MCF 10A (cell line): ENCODE measurements at regions of chr3 and their contacts with region 1.

Region 1: GRCh38 chr3:4416961-4417360 is 50.1 kb downstream of the SUMF1 start:
- DNase-seq: peak; percentile 100
- H3K4me3 Mint-ChIP-seq: no peak overlapping the region
- H3K27ac Mint-ChIP-seq: peak overlapping the region; percentile 44
- H3K4me1 Mint-ChIP-seq: peaks cover 14% of the 10 kb centered on the region
- H3K27me3 Mint-ChIP-seq: no peaks in the 10 kb centered on the region
- CTCF ChIP-seq: no peak

Region 2: DNA sequence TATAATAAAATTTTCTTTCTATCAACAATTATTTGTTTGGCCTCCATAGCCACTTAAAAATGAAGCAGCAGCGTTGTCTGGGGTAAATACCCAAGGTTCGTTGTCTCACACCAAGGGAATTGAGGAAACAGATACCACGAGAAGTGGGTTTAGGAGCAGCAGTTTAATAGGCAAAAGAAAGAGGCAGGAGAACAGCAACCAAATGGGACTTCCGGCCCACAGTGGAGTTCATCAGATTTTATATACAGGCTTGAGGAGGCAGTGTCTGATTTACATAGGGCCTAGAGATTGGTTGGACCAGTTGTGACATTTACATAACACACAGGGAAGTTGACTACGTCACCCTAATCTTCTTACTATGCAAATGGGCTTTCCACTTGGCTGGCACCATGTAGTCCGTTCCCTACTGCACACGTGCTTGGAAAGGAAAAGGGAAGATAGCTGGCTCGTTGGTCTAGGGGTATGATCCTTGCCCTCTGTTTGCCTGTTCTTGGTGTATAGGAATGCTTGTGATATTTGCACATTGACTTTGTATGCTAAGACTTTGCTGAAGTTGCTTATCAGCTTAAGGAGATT is 175.3 kb before region 1 on chr3:
- CTCF ChIA-PET with region 1: no interaction called
- POLR2A ChIA-PET with region 1: no interaction called
- intact Hi-C with region 1: no loop called
- DNase-seq: no peak
- H3K4me3 Mint-ChIP-seq: no peak overlapping the region
- H3K27ac Mint-ChIP-seq: no peak overlapping the region
- H3K4me1 Mint-ChIP-seq: no peaks in the 10 kb centered on the region
- H3K27me3 Mint-ChIP-seq: no peaks in the 10 kb centered on the region
- CTCF ChIP-seq: no peak

Region 3: GRCh38 chr3:4398120-4398940 is 18.6 kb before region 1 on chr3:
- CTCF ChIA-PET with region 1: interaction called, 10 read pairs
- POLR2A ChIA-PET with region 1: interaction called, 3 read pairs
- intact Hi-C with region 1: no loop called
- DNase-seq: no peak
- H3K4me3 Mint-ChIP-seq: no peak overlapping the region
- H3K27ac Mint-ChIP-seq: no peak overlapping the region
- H3K4me1 Mint-ChIP-seq: no peaks in the 10 kb centered on the region
- H3K27me3 Mint-ChIP-seq: no peaks in the 10 kb centered on the region
- CTCF ChIP-seq: no peak

Region 4: DNA sequence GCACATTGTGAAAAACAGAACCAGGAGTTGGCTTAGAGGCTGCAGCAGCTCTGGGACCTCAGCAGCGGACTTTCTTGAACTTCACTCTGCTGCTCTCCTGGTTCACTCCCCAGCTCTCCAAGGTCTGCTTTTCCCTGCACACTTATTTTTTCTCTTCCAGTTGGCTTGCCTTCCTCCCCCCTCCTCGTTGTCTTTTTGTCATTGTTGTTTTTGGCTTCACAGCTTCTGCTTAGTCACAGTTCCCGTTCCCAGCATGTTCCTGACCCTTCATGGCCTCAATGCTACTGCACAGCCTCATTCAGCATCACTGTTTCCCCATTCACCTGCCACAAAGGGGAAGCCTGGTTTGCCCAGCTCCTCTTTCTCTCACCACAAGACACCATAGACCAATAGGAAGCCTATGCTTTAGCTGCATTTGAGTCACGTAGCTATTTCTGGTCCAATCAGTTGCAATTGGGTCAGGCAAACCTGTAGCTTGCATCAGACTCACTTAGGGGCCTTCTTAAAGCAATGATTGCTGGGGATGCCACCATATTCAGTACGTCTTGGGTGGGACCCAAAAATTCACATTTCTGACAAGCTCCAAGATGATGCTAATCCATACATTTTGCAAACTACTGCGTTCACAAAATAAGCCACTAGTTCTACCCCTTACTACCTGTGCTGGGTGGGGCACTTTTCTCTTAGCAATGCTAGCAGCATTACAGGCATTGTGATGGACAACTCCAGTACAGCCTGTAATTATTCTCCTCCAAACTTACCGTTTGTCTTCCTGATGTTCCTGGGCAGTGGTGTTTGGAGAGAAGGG is 57.9 kb after region 1 on chr3:
- CTCF ChIA-PET with region 1: interaction called, 4 read pairs
- POLR2A ChIA-PET with region 1: no interaction called
- intact Hi-C with region 1: loop called (anchors 5 kb)
- DNase-seq: peak; percentile 93
- H3K4me3 Mint-ChIP-seq: no peak overlapping the region
- H3K27ac Mint-ChIP-seq: no peak overlapping the region
- H3K4me1 Mint-ChIP-seq: peaks cover 12% of the 10 kb centered on the region
- H3K27me3 Mint-ChIP-seq: peaks cover 19% of the 10 kb centered on the region
- CTCF ChIP-seq: no peak